SK-N-SH (cell line): ENCODE measurements at regions of chr7 and their contacts with region 1.

Region 1: DNA sequence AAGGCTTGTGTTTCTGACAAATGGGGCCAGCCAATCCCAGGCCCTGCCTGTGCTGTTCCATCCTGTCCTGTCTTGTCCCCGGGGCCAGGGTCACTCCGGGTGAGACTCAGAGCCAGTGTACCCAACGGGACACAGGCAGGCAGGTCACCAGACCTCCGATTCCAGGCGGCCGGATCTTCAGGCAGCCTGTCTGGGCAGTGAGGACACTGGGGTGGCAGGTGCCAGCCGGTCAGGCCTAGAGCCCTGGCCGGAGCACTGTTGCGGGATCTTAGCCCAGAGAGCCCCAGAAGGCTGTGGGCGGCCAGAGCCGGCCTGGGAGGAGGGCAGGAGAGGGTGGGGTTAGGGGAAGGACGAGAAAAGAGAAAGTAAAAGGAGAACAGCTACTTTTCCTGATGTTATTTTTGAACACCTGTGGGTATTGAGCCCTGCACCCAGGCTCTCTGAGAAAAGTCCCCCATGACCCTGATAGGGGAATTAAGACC is 134.3 kb upstream of the TNRC18 start:
- DNase-seq: peak; percentile 43
- H3K4me3 ChIP-seq: no peak overlapping the region
- H3K27ac ChIP-seq: peak overlapping the region in 1 of 2 experiments; percentile 31; a peak in 2 of 4 replicates
- H3K4me1 ChIP-seq: peaks cover 6 to 23% of the 10 kb centered on the region in 2 experiments; a peak in 3 of 4 replicates
- H3K27me3 ChIP-seq: no peaks in the 10 kb centered on the region
- CTCF ChIP-seq: no peak
- EP300 ChIP-seq: no peak
- RAD21 ChIP-seq: no peak

Region 2: DNA sequence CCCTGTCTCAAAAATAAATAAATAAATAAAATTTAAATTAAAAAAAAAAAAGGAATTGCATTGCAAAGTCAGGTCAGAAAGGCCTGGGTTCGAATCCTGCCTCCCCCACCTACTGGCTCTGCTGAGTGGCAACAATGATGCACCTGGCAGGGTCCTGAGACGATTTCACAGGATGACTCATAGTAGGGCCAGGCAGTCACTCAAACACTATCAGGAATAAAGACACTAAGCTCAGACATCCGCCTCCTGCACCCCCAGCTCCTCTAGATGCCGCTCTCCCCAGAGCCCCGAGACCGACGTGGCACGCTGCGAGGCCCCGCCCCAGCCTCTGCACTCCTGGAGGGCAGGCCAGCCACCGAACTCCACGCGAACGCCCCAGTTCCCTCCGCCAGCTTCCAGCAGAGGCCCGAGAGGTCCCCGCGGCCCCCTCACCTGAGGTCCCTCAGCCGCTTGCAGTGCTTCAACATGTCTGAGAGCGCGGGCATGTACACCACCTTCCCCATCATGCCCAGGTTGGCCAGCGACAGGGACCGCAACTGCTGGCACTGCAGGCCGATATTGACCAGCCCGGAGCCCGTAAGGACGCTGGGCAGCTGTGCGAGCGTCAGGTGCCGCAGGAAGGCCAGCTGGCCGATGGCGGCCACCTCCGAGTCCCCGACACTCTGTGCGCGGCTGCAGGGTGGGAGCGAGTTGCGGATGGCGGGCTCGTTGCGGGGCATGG is 57.7 kb before region 1 on chr7:
- CTCF ChIA-PET with region 1: interaction called, 32 read pairs
- POLR2A ChIA-PET with region 1: interaction called, 4 read pairs
- DNase-seq: peak; percentile 27
- H3K4me3 ChIP-seq: no peak overlapping the region
- H3K27ac ChIP-seq: no peak overlapping the region
- H3K4me1 ChIP-seq: peaks cover 0 to 7% of the 10 kb centered on the region in 2 experiments; a peak in 2 of 4 replicates
- H3K27me3 ChIP-seq: no peaks in the 10 kb centered on the region
- CTCF ChIP-seq: no peak
- EP300 ChIP-seq: no peak
- RAD21 ChIP-seq: no peak

Region 3: DNA sequence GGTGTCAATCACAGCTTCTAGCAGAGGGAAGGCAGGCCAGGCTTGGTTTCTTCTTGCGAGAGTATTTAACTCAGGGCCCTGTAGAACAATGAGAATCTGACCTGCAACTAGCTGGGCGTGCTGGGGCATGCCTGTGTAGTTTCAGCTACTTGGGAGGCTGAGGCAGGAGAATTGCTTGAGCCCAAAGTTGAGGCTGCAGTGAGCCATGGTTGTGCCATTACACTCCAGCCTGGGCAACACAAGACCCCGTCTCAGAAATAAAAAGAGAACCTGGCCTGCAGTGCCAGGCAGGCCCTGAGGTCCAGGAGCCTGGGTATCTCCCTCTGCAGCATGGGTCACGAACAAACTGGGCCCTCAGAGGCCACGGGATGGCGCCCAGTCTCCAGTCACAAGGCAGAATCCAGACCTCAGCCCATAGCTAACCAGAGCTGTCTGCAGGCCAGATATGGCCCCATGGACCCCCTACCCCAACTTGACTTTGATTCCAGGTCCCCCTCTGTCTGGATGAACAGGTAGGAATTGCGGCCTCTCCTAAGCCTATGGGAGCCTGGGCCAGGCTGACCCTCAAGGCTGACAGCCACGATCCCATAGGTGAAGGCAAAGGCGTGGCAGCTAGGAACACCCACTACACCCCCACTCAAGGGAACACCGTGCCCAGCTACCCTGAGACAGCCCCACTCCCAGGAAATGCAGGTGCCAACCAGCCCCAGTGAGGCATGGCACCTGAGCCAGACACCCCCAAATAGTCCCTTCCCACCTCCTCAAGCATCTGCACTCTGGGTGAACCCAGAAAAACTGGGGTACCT is 31.7 kb before region 1 on chr7:
- CTCF ChIA-PET with region 1: interaction called, 31 read pairs
- POLR2A ChIA-PET with region 1: interaction called, 8 read pairs
- DNase-seq: peak; percentile 31
- H3K4me3 ChIP-seq: 0 out of 4 replicates have a peak overlapping the region, but pooled peaks of 1 of the 2 experiments have one; percentile 85
- H3K27ac ChIP-seq: peak overlapping the region; percentile 56 to 95
- H3K4me1 ChIP-seq: peaks cover 13 to 26% of the 10 kb centered on the region in 2 experiments; a peak in 3 of 4 replicates
- H3K27me3 ChIP-seq: no peaks in the 10 kb centered on the region
- CTCF ChIP-seq: no peak
- EP300 ChIP-seq: no peak
- RAD21 ChIP-seq: peak; percentile 21; the same call in 1 of the 2 replicates

Region 4: DNA sequence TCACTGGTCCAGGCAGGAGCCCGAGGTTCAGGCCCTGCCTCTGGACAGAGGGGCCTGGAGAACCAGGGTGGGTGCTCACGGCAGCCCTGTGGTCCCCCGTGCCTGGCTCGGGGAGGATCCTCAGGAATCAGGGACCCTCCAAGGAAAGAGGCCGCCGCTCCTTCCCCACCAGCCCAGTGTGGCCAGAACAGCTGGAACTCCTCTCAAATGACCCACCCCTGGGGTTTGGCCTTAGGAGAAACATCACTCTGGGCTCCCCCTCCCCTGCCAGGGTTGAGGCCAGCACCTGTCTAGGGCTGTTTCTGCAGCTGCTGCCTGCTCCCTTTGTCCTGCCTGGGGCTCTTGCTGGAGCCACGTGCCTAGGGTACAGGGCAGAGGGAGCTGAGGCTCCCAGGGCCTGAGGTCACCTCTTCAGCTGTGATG is 62.5 kb after region 1 on chr7:
- CTCF ChIA-PET with region 1: no interaction called
- POLR2A ChIA-PET with region 1: no interaction called
- DNase-seq: peak; percentile 61
- H3K4me3 ChIP-seq: no peak overlapping the region
- H3K27ac ChIP-seq: peak overlapping the region in 1 of 2 experiments; percentile 23; a peak in 2 of 4 replicates
- H3K4me1 ChIP-seq: peaks cover 2 to 4% of the 10 kb centered on the region in 2 experiments; a peak in 3 of 4 replicates
- H3K27me3 ChIP-seq: no peaks in the 10 kb centered on the region
- CTCF ChIP-seq: no peak
- EP300 ChIP-seq: no peak
- RAD21 ChIP-seq: no peak

Region 5: DNA sequence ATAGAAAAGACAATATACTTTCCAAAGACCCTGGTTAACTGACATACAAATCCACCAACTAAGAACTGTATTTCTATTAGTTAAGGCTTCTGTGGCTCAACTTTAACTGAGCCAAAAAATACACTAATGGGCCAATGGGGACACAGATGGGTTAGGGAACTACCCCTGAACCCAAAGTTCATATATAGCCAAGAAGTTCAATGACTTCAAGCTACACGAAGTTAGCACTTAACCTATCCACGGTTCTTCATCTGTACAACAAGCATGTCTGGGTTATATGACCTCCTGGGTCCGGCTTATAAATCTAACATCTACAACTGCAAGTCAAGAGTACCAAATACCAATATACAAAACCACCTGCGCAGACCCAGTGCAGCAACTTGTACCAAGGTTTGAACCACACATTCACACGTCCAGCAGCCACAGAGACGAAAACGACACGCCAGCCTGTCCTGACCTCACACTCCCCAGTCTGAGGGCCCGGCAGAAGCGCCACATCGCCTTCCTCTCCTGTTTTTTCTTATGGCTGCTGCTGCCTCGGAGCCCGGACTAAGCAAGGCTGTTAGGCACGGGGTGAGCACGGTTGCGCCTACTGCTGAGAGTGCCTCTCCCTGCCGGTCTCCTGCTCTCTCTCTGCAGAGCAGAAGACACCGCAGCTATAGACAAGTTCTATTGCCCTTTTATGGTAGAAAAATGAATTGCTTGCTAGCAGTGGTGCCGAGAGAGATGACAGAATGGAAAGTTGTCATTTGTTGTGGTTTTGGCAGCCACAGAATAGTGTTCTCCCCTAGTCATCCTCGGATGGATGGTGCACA is 137.2 kb after region 1 on chr7:
- CTCF ChIA-PET with region 1: interaction called, 20 read pairs
- POLR2A ChIA-PET with region 1: no interaction called
- DNase-seq: no peak
- H3K4me3 ChIP-seq: peak overlapping the region in 1 of 2 experiments; percentile 16; a peak in 1 of 4 replicates
- H3K27ac ChIP-seq: peak overlapping the region; percentile 95 to 99
- H3K4me1 ChIP-seq: peaks cover 49 to 80% of the 10 kb centered on the region in 2 experiments
- H3K27me3 ChIP-seq: no peaks in the 10 kb centered on the region
- CTCF ChIP-seq: no peak
- EP300 ChIP-seq: peak in 1 of 2 experiments; percentile 88; a peak in 2 of 4 replicates
- RAD21 ChIP-seq: no peak

Region 6: GRCh38 chr7:5704534-5704922 is 146.6 kb after region 1 on chr7:
- CTCF ChIA-PET with region 1: interaction called, 28 read pairs
- POLR2A ChIA-PET with region 1: no interaction called
- DNase-seq: peak; percentile 75
- H3K4me3 ChIP-seq: no peak overlapping the region
- H3K27ac ChIP-seq: peak overlapping the region; percentile 6 to 7; a peak in 3 of 4 replicates
- H3K4me1 ChIP-seq: peaks cover 9 to 13% of the 10 kb centered on the region in 2 experiments; a peak in 3 of 4 replicates
- H3K27me3 ChIP-seq: no peaks in the 10 kb centered on the region
- CTCF ChIP-seq: peak; percentile 99
- EP300 ChIP-seq: no peak
- RAD21 ChIP-seq: peak; percentile 98

Region 7: GRCh38 chr7:5797716-5798115 is 239.8 kb after region 1 on chr7:
- CTCF ChIA-PET with region 1: no interaction called
- POLR2A ChIA-PET with region 1: no interaction called
- DNase-seq: no peak
- H3K4me3 ChIP-seq: no peak overlapping the region
- H3K27ac ChIP-seq: no peak overlapping the region
- H3K4me1 ChIP-seq: no peaks in the 10 kb centered on the region
- H3K27me3 ChIP-seq: no peaks in the 10 kb centered on the region
- CTCF ChIP-seq: no peak
- EP300 ChIP-seq: no peak
- RAD21 ChIP-seq: no peak